Mammary epithelial cell (primary cell): ENCODE measurements at regions of chr7 and their contacts with region 1.

Region 1: DNA sequence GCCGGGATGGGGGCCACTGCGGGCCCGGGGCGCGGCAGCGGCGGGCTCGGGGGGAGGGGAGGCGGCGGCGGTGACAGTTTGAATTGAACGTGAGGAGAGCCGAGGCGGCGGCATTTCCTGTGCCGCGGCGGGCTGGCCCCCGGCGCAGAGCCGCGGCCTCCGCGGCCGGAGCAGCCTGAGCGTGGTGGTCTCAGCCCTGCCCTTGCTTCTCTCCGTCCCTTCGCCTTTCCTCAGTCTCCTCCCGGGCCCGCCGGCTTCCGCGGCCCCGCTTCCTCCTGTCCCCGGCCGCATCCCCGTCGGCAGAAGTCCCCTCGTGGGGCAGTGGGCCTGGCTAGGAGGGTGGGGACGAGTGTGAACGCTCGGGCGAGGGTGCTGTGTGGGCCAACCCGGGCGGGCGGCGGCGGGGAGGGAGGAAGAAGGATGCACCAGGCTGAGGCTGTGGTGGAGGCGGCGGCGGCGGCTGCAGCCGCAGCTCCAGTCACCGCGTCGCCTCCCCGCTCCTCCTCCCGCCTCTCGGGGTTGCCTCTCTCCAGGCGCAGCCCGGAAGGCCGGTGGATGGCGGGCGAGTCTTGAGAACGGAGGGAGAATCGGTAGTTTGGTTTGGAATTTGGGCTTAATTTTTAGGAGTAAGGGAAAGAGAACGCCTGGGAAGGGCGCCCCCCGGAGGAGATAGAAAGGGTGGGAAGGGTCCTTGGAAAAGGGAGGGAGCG is 690 bp downstream of the SEPTIN7 start:
- DNase-seq: peak; percentile 70
- H3K4me3 ChIP-seq: peak overlapping the region; percentile 95
- H3K27ac ChIP-seq: peak overlapping the region; percentile 91
- H3K4me1 ChIP-seq: peaks cover 14% of the 10 kb centered on the region
- H3K27me3 ChIP-seq: no peaks in the 10 kb centered on the region
- CTCF ChIP-seq: peak; percentile 33 to 62

Region 2: DNA sequence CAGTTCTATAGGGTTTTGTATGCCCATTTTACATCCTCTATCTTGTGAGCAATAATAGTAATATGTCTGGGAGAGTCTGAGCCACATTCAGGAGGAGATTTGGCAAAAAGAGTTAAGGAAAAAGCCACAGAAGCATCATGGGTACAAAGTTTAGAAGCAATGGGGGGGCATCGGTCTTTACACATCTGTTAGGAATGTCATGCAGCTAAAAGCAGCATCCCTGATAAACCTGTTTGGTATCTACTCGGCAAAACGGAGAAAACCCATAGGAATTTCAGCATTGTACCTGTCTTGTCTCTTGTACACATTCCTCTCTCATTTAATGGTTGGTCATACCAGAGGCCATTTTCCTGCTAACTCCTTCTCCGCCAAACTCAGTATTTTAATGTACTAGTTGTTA is 94.1 kb before region 1 on chr7:
- CTCF ChIA-PET with region 1: no interaction called
- dilution Hi-C with region 1: loop called (anchors 5 kb)
- in situ Hi-C with region 1: no loop called
- intact Hi-C with region 1: loop called (anchors 1 kb)
- DNase-seq: no peak
- H3K4me3 ChIP-seq: no peak overlapping the region
- H3K27ac ChIP-seq: no peak overlapping the region
- H3K4me1 ChIP-seq: no peaks in the 10 kb centered on the region
- H3K27me3 ChIP-seq: no peaks in the 10 kb centered on the region
- CTCF ChIP-seq: no peak

Region 3: GRCh38 chr7:35839860-35840854 is 38.6 kb after region 1 on chr7:
- CTCF ChIA-PET with region 1: no interaction called
- dilution Hi-C with region 1: no loop called
- in situ Hi-C with region 1: no loop called
- intact Hi-C with region 1: loop called (anchors 2 kb)
- DNase-seq: peak; percentile 17
- H3K4me3 ChIP-seq: no peak overlapping the region
- H3K27ac ChIP-seq: no peak overlapping the region
- H3K4me1 ChIP-seq: no peaks in the 10 kb centered on the region
- H3K27me3 ChIP-seq: no peaks in the 10 kb centered on the region
- CTCF ChIP-seq: no peak

Region 4: DNA sequence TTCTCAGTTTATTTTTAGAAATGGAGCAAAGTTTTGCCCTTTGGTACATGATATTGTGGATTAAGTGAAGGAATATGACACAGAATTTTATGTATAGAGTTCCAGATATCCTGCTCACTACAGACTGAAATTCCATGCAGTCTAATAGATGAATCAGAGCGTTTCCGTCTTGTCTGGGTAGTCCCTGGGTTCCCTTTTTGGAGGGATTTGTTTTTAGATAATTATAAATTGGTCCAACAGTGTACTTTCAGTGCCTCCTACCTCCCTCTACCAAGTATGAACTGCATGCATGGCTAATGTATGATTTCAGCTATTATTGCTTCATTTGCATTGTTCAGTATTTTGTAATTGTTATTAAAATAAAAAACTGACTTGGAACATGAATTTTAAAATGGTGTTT is 73.7 kb after region 1 on chr7:
- CTCF ChIA-PET with region 1: no interaction called
- dilution Hi-C with region 1: no loop called
- in situ Hi-C with region 1: no loop called
- intact Hi-C with region 1: loop called (anchors 5 kb)
- DNase-seq: no peak
- H3K4me3 ChIP-seq: no peak overlapping the region
- H3K27ac ChIP-seq: no peak overlapping the region
- H3K4me1 ChIP-seq: no peaks in the 10 kb centered on the region
- H3K27me3 ChIP-seq: no peaks in the 10 kb centered on the region
- CTCF ChIP-seq: no peak

Region 5: GRCh38 chr7:35891004-35891830 is 89.7 kb after region 1 on chr7:
- CTCF ChIA-PET with region 1: no interaction called
- dilution Hi-C with region 1: no loop called
- in situ Hi-C with region 1: no loop called
- intact Hi-C with region 1: no loop called
- DNase-seq: no peak
- H3K4me3 ChIP-seq: no peak overlapping the region
- H3K27ac ChIP-seq: no peak overlapping the region
- H3K4me1 ChIP-seq: no peaks in the 10 kb centered on the region
- H3K27me3 ChIP-seq: no peaks in the 10 kb centered on the region
- CTCF ChIP-seq: no peak

Region 6: DNA sequence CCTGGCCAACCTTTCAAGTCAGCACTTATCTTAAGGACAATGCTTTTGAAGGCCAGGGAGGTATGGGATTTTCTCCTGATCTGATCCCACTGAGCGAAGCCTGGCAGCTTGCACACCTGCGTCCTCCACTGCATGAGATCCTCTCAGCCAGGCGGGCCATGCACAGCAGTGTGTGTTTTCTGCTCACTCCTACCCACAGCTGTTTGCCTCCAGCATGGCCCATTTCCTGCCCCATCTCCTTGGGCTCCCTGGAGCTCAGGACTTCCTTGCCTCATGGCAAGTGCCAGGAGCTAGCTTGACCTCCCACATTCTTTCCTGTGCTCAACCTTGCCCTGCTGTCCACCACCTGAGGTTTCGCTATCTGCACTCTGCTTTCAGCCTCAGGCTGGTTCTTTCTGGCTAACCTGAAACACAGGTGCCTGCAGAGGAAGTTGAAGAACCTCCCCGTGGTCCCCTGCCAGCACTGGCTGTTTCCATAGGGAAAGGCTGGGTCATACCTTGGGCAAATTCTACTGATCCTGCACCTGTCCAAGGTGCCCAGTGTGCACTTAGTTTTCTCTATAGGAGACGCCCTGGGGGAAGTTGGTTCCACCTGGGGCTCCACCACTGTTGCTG is 307.6 kb after region 1 on chr7:
- CTCF ChIA-PET with region 1: no interaction called
- dilution Hi-C with region 1: no loop called
- in situ Hi-C with region 1: no loop called
- intact Hi-C with region 1: no loop called
- DNase-seq: no peak
- H3K4me3 ChIP-seq: no peak overlapping the region
- H3K27ac ChIP-seq: no peak overlapping the region
- H3K4me1 ChIP-seq: no peaks in the 10 kb centered on the region
- H3K27me3 ChIP-seq: no peaks in the 10 kb centered on the region
- CTCF ChIP-seq: no peak